Endothelial cell of umbilical vein (primary cell): ENCODE measurements at regions of chr13 and their contacts with region 1.

Region 1: DNA sequence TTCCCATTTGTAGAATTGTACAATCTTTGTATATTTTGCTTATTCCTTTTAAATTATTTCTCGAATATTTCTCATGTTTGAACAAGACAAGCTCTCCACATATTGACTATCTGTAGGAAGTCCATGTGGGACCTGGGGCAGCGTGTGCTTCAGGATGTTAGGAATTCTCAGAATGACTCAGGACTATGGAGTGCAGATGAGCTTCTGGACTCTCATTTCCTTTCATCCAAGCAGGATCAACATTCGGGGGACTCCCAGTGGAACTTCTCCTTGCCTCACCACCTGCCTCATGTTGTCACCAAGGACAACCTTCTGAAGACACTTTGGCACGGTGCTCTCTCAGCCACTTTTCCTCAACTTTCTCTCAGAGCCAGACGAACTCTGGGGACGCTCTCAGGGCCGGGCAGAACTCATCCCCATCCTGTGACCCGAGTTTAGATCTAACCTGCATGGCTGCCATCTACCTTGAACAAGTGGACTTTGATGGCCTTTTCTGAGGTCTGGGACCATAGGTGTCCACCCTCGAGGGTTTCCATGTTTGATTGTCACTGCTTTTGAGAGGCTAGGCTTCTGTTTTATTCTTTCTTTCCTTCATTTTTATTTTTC is 441.7 kb downstream of the IRS2 start:
- DNase-seq: peak; percentile 67
- H3K4me3 ChIP-seq: no peak overlapping the region
- H3K27ac ChIP-seq: peak overlapping the region; percentile 90
- H3K4me1 ChIP-seq: peaks cover 40% of the 10 kb centered on the region
- H3K27me3 ChIP-seq: no peaks in the 10 kb centered on the region
- CTCF ChIP-seq: no peak
- POLR2A ChIP-seq: no peak

Region 2: GRCh38 chr13:109198585-109198984 is 146.1 kb before region 1 on chr13:
- CTCF ChIA-PET with region 1: no interaction called
- POLR2A ChIA-PET with region 1: no interaction called
- dilution Hi-C with region 1: no loop called
- intact Hi-C with region 1: loop called (anchors 2 kb)
- DNase-seq: peak; percentile 6
- H3K4me3 ChIP-seq: no peak overlapping the region
- H3K27ac ChIP-seq: peak overlapping the region; percentile 7
- H3K4me1 ChIP-seq: peaks cover 18% of the 10 kb centered on the region
- H3K27me3 ChIP-seq: no peaks in the 10 kb centered on the region
- CTCF ChIP-seq: no peak
- POLR2A ChIP-seq: no peak

Region 3: GRCh38 chr13:110126391-110126961 is 781.8 kb after region 1 on chr13:
- CTCF ChIA-PET with region 1: no interaction called
- POLR2A ChIA-PET with region 1: no interaction called
- dilution Hi-C with region 1: no loop called
- intact Hi-C with region 1: loop called (anchors 5 kb)
- DNase-seq: peak; percentile 98
- H3K4me3 ChIP-seq: peak overlapping the region in 1 of 3 experiments; percentile 9
- H3K27ac ChIP-seq: peak overlapping the region; percentile 92
- H3K4me1 ChIP-seq: peaks cover 50% of the 10 kb centered on the region
- H3K27me3 ChIP-seq: no peaks in the 10 kb centered on the region
- CTCF ChIP-seq: no peak
- POLR2A ChIP-seq: peak; percentile 43